AG04450 (cell line): ENCODE measurements at regions of chr17 and their contacts with region 1.

Region 1: DNA sequence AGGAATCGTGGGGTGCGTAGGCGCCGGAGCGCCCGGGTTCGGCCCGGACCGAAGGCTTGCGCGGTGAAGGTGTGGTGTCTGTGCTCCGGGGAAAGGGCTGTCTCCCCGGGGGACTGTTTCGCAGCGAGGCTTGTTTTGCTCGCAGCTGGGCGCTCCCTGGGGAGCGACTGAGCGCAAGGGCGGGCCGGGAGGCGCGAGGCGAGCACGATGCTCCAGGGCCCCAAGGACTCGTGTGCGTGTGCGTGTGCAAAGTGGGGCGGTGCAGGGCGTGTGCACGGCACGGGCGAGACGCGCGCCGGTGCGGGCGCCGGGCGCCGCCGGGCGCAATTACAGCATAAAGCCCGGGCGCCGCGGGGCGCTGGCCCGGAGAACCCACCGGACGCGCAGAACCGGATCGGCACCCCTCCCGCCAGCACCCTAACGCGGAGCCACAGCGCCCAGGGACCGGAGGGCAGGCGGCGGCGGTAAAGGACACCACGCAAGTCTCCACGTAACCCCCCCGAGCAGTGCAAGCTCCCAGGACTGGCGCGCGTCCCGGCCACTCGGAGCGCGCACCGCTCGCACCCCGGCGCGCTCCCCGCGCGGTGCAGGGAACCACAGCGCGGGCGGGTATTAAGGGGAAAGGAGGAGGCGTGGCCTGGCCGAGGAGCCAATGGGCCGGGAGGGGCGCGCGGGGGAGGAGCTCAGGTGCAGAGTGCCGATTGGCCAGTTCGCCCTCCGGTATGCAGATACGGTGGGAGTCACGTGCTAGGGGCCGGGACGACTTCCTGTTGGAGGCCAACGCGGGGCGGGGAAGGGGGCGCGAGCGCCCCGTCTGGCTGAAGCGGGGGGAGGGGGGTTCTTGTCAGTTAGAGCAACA is at the start of gene TNRC6C:
- DNase-seq: peak; percentile 97
- H3K4me3 ChIP-seq: peak within 1 kb of the TSS; percentile 77
- H3K27ac ChIP-seq: no peak within 1 kb of the TSS
- H3K27me3 ChIP-seq: peaks cover 32% of the 10 kb centered on the region
- CTCF ChIP-seq: no peak; the same call in 1 of the 2 replicates
- polyA plus RNA-seq, gene TNRC6C: 1.2 and 2.2 TPM in 2 replicates

Region 2: GRCh38 chr17:77542551-77543490 is 415.3 kb before region 1 on chr17:
- CTCF ChIA-PET with region 1: interaction called, 9 read pairs
- POLR2A ChIA-PET with region 1: interaction called, 32 read pairs
- DNase-seq: peak; percentile 66
- H3K4me3 ChIP-seq: no peak overlapping the region
- H3K27ac ChIP-seq: no peak overlapping the region
- H3K27me3 ChIP-seq: peaks cover 15% of the 10 kb centered on the region
- CTCF ChIP-seq: peak; percentile 98

Region 3: GRCh38 chr17:77974396-77974795 is 16.3 kb after region 1 on chr17:
- CTCF ChIA-PET with region 1: no interaction called
- POLR2A ChIA-PET with region 1: interaction called, 18 read pairs
- DNase-seq: no peak
- H3K4me3 ChIP-seq: no peak overlapping the region
- H3K27ac ChIP-seq: no peak overlapping the region
- H3K27me3 ChIP-seq: no peaks in the 10 kb centered on the region
- CTCF ChIP-seq: no peak

Region 4: DNA sequence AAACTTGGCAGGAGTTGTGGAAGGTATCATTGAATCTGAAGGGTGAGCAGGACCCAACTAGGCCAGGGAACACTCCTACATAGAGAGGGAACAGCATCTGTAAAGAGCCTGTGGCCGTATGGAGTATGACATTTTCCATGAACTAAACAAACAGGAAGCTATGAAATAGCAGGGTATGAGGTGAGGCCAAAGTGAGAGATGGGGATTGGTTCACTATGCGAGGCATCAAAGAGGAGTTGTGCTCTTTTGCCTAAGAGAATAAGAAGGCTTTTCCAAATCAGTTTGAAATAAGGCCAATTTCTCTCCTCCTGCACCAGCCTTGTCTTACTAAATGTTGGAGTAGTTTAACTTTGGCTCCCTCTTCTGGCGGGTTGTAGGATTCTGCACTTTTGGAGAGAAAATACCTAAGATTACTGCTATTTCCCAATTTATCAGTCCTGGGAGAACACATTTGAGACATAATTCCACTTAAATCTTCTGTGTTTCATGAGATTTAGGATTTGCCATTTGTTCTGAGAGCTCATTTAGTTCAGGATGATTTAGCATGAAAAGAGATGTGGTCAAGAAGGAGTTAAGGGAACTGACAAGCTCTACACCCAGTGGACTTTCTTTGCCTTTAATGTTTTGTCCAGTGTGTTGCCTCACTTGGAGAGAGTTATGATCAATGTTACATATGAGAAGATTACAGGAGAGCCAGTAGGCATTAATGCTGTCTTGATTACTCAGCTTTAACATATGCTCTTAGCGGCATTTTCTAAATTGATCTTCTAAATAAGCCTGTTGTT is 55.8 kb after region 1 on chr17:
- CTCF ChIA-PET with region 1: interaction called, 28 read pairs
- POLR2A ChIA-PET with region 1: interaction called, 18 read pairs
- DNase-seq: peak; percentile 51
- H3K4me3 ChIP-seq: no peak overlapping the region
- H3K27ac ChIP-seq: no peak overlapping the region
- H3K27me3 ChIP-seq: no peaks in the 10 kb centered on the region
- CTCF ChIP-seq: peak; percentile 87

Region 5: GRCh38 chr17:78040440-78041385 is 82.6 kb after region 1 on chr17:
- CTCF ChIA-PET with region 1: no interaction called
- POLR2A ChIA-PET with region 1: interaction called, 26 read pairs
- DNase-seq: no peak
- H3K4me3 ChIP-seq: peak overlapping the region; percentile 73
- H3K27ac ChIP-seq: peak overlapping the region; percentile 89
- H3K27me3 ChIP-seq: no peaks in the 10 kb centered on the region
- CTCF ChIP-seq: peak; percentile 17; the same call in 1 of the 2 replicates